ENCODE measurements at regions of chr6 and their contacts with region 1.

Region 1: GRCh38 chr6:139124887-139125672 is 9.8 kb upstream of the HECA start:
- DNase-seq: peak; percentile 60
- ATAC-seq: peak; percentile 99

Region 2: GRCh38 chr6:138722425-138723371 is 402.4 kb before region 1 on chr6:
- intact Hi-C with region 1: no loop called
- DNase-seq: no peak
- ATAC-seq: no peak

Region 3: DNA sequence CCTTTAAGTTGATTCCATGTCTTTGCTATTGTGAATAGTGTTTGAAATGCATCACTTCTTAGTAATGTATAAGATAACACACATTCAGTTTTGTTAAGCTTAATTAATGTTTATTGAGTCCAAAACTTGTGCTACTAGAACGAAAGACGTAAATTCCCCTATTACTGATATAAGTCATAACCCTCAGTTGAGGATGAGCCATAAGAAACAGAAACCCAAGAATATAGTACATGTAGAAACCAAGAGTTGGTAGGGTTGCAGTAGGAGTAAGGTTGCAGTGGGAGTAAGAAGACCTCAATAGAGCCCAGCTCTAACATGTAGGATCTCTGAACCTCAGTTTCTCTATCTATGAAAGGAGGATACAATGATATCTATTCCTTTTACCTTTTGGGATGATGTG is 230.1 kb after region 1 on chr6:
- intact Hi-C with region 1: loop called (anchors 10 kb)
- DNase-seq: no peak
- ATAC-seq: no peak

Region 4: DNA sequence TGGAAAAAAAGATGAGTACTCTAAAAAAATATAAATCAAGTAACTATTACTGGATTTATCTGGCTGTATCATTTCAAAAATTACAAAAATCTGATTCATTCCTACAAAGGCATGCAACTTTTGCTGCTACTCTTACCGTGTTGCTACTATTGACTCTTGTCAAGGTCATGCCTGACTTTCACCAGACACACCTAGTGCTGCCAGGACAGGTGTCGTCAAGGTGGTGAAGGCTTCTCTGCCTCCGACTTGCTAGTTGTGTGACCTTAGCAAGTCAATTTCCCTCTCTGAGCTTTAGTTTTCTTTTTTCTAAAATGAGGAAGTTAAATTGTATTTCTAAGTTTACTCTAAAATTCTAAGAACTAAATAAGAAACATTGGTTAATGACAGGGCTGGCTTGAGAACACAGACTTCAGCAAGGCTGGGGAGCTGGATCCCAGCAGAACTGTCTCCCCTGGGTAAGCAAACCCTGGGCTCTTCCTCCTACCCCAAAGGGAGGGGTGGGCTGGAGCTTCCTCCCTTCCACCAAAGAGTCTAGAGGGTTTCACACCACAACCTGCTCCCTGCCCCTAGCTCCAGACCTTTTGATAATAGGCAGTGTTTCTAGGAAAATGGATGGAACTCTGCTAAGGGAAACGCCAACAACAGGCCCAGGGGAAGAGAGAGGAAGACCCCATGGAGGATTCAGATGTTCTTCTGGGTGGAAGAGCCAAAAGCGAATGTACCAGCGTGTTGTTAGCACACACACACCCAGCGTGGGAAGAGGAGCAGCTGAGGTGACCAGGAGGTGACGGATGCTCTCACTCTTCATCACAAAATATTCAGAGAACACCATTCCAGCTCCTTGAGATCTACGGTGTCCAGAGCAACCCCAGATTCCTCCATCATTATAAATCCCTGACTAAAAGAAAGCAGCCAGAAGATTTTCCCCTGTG is 297.3 kb after region 1 on chr6:
- intact Hi-C with region 1: no loop called
- DNase-seq: no peak
- ATAC-seq: no peak